CD8-positive, alpha-beta memory T cell (primary cell): ENCODE measurements at regions of chr7 and their contacts with region 1.

Region 1: DNA sequence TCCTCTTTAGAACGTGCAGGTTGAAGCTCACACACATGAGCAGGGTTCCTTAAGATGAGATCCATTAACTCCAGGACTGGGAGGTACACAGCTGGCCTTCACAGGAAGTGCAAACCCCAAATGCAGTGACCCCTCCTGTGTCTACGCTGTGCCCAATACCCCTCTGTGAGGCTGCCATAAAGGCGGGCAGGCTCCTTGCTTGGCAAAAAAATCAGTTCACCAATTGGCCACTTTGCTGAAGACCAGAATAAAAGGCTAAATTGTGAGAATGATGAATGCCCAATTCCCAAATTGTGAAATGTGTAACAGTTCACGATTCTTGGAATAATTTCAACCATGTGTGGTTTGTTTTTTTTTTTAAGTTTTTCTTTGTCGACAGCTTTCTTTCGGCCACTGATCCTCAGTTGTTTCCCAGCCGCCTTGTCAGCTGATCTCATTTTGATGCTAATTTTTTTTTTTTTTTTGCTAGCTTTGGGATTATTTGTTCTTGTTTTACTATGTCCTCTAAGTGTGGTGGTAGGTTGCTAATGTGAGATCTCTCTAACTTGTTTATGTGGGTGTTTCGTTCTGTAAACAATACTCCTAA is 101.9 kb upstream of the PRSS58 start:
- DNase-seq: no peak
- H3K4me3 ChIP-seq: no peak overlapping the region
- H3K4me3 Mint-ChIP-seq: no peak overlapping the region
- H3K27ac ChIP-seq: no peak overlapping the region
- H3K27ac Mint-ChIP-seq: no peak overlapping the region
- H3K4me1 ChIP-seq: peaks cover 22% of the 10 kb centered on the region
- H3K4me1 Mint-ChIP-seq: peaks cover 18 to 37% (median 33%) of the 10 kb centered on the region in 3 donors
- H3K27me3 ChIP-seq: no peaks in the 10 kb centered on the region
- H3K27me3 Mint-ChIP-seq: peaks cover 6% of the 10 kb centered on the region in 2 donors

Region 2: DNA sequence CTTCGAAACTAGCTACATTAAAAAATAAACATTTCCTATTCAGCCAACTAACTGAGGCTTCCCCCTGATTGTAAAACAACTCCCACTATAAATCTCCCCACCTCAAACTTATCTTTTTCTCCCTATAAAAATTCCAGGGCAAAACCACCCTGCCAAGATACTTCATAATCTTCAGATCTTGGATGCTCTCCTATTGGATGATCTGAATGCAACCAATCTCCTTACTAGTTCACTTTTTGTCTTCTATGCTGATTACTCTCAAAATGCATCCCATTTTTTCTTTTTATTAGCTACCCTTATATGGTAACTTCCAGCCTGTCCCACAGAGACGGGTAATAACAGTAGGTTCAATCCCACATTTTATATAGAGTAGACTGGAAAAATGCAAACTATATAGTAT is 86.9 kb before region 1 on chr7:
- CTCF ChIA-PET with region 1: no interaction called
- POLR2A ChIA-PET with region 1: no interaction called
- DNase-seq: no peak
- H3K4me3 ChIP-seq: no peak overlapping the region
- H3K4me3 Mint-ChIP-seq: no peak overlapping the region
- H3K27ac ChIP-seq: no peak overlapping the region
- H3K27ac Mint-ChIP-seq: no peak overlapping the region
- H3K4me1 ChIP-seq: no peaks in the 10 kb centered on the region
- H3K4me1 Mint-ChIP-seq: no peaks in the 10 kb centered on the region
- H3K27me3 ChIP-seq: no peaks in the 10 kb centered on the region
- H3K27me3 Mint-ChIP-seq: peaks cover 7 to 41% of the 10 kb centered on the region in 2 donors

Region 3: DNA sequence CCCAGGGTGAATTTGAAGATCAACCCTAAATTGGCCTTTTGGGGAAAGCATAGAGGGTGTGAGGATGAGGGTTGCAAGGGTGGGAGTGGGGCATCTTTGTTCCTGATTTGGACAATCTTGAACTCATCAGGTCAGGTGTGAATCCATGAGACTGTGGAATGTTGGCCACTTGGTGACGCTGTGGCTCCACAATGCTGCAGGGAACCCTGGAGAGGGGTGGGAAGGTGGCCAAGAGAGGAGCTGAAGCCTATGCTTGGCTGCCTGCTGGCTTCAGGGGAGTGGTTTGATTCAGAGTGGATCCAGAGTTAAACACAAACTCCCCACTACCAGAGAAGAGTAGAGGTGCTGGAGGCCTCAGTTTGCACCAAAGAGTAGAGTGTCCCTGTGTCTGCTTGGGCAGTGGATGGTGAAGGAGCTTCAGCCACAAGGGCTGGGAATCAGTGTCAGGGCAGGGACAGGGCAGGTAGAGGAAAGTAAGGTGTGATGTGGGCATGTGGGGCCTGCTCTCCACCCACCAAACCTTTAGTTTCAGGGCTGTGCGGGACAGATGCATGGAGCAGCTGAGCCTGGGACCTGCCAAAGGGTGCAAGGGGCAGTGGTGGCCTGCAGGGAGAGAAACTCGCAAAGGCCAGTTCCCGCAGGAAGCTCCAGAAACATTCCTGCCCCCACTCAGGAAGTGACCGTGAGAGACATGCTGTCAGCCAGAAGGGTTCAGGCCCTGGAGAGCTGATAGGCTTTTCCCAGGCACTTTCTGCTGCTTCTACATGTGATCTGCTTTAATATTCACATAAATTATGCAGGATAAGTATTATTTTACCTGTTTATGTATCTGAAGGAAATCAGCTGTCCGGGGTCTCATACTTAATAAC is 20.9 kb before region 1 on chr7:
- CTCF ChIA-PET with region 1: no interaction called
- POLR2A ChIA-PET with region 1: no interaction called
- DNase-seq: no peak
- H3K4me3 ChIP-seq: no peak overlapping the region
- H3K4me3 Mint-ChIP-seq: peak overlapping the region in 1 of 7 donors; percentile 65
- H3K27ac ChIP-seq: no peak overlapping the region
- H3K27ac Mint-ChIP-seq: peak overlapping the region in 4 of 8 donors; percentile 34 to 53 (median 45)
- H3K4me1 ChIP-seq: no peaks in the 10 kb centered on the region
- H3K4me1 Mint-ChIP-seq: peaks cover 9 to 19% (median 10%) of the 10 kb centered on the region in 3 donors
- H3K27me3 ChIP-seq: no peaks in the 10 kb centered on the region
- H3K27me3 Mint-ChIP-seq: peaks cover 8 to 9% of the 10 kb centered on the region in 2 donors

Region 4: GRCh38 chr7:142385491-142386340 is 25.9 kb after region 1 on chr7:
- CTCF ChIA-PET with region 1: interaction called, 13 read pairs
- POLR2A ChIA-PET with region 1: no interaction called
- DNase-seq: peak in 3 of 5 donors; percentile 4 to 61 (median 35)
- H3K4me3 ChIP-seq: no peak overlapping the region
- H3K4me3 Mint-ChIP-seq: peak overlapping the region in 1 of 7 donors; percentile 49
- H3K27ac ChIP-seq: no peak overlapping the region
- H3K27ac Mint-ChIP-seq: peak overlapping the region in 2 of 8 donors; percentile 2 to 46
- H3K4me1 ChIP-seq: peaks cover 18% of the 10 kb centered on the region
- H3K4me1 Mint-ChIP-seq: peaks cover 19 to 27% (median 20%) of the 10 kb centered on the region in 3 donors
- H3K27me3 ChIP-seq: no peaks in the 10 kb centered on the region
- H3K27me3 Mint-ChIP-seq: no peaks in the 10 kb centered on the region